Astrocyte of the cerebellum (primary cell): ENCODE measurements at regions of chr20 and their contacts with region 1.

Region 1: GRCh38 chr20:13960525-13960924 is 29.9 kb downstream of the SEL1L2 start:
- DNase-seq: no peak
- H3K4me3 ChIP-seq: no peak overlapping the region
- CTCF ChIP-seq: no peak

Region 2: DNA sequence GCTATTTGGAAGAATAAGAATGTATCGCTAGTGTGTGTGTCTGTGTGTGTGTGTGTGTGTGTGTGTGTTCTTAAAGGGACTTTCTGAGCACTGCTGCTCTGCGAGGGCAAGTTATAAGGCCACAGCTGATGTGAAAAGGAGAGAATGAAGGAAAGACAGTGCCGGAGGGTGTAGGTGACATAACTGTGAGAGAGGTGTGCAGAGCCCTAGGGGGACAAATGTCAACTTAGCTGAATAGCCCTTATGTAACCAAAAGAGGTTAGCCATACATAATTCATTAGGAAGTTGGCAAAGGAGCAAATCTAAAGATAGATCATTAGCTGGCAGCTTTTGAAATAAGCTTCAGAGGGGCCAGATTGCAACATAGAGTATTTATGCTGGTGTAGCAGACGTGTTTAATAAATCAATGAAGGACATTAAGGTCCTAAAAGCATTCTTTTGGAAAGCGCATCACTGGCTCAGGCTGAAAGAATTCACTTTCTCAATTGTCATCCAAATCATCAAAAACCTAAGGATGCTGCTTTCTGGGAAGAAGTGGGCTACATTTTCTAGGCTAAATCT is 94.7 kb before region 1 on chr20:
- in situ Hi-C with region 1: loop called (anchors 5 kb)
- DNase-seq: no peak
- H3K4me3 ChIP-seq: no peak overlapping the region
- CTCF ChIP-seq: no peak

Region 3: GRCh38 chr20:14030991-14031390 is 70.5 kb after region 1 on chr20:
- in situ Hi-C with region 1: no loop called
- DNase-seq: no peak
- H3K4me3 ChIP-seq: no peak overlapping the region
- CTCF ChIP-seq: no peak